WTC11 (cell line): ENCODE measurements at regions of chr9 and their contacts with region 1.

Region 1: DNA sequence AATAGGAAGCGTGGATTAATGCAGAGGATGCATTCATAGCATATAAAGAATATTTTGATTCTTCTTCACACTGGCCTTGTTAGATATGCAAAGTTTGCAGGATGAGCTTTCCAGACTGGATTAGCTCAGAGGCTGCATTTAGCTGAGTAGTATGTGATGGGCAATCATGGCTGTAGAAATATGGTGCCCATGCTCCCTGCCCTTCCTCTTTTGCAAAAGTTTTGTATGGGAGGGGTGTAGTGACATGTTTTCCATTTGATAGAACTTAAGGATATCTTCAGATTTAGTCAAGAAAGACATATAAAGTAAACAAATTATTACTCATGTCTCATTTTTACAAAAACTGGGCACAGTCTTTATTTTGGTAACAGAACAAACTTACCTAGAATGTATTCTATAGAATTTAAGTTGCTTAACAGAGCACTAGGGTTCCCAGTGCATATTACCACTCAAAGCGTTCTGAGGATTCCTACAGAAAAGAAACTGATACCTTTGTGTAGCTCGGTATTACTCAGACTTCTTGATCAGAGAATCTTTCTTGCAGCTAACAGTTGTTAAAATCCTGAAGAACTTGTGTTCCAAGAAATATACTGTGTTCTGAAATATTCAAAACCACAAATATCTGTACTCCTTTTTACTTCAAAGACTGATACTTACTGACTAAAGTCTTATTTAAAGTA is 9.8 kb downstream of the GTF3C4 start:
- DNase-seq: no peak
- ATAC-seq: no peak
- H3K4me3 Mint-ChIP-seq: no peak overlapping the region
- H3K27ac Mint-ChIP-seq: no peak overlapping the region
- H3K4me1 Mint-ChIP-seq: no peaks in the 10 kb centered on the region
- H3K27me3 Mint-ChIP-seq: no peaks in the 10 kb centered on the region
- CTCF ChIP-seq: no peak

Region 2: GRCh38 chr9:132840980-132841379 is 160.9 kb after region 1 on chr9:
- CTCF ChIA-PET with region 1: no interaction called
- POLR2A ChIA-PET with region 1: interaction called, 10 read pairs
- DNase-seq: no peak
- ATAC-seq: no peak
- H3K4me3 Mint-ChIP-seq: no peak overlapping the region
- H3K27ac Mint-ChIP-seq: no peak overlapping the region
- H3K4me1 Mint-ChIP-seq: peaks cover 6% of the 10 kb centered on the region; the same call in 1 of the 2 replicates
- H3K27me3 Mint-ChIP-seq: no peaks in the 10 kb centered on the region
- CTCF ChIP-seq: no peak